Activated B cell treated with CpG ODN at 0.5 μM for 24 hours (primary cell): ENCODE measurements at regions of chr13 and their contacts with region 1.

Region 1: GRCh38 chr13:49606747-49607648 is 21.3 kb upstream of the ARL11 start:
- DNase-seq: peak; percentile 64
- ATAC-seq: peak; percentile 96
- H3K4me3 Mint-ChIP-seq: peak overlapping the region; percentile 81
- H3K27ac Mint-ChIP-seq: peak overlapping the region; percentile 79
- H3K4me1 Mint-ChIP-seq: peaks cover 26% of the 10 kb centered on the region
- H3K27me3 Mint-ChIP-seq: no peaks in the 10 kb centered on the region
- CTCF ChIP-seq: no peak

Region 2: GRCh38 chr13:49240017-49240416 is 367.0 kb before region 1 on chr13:
- CTCF ChIA-PET with region 1: interaction called, 3 read pairs
- POLR2A ChIA-PET with region 1: no interaction called
- intact Hi-C with region 1: loop called (anchors 5 kb)
- DNase-seq: no peak
- ATAC-seq: peak; percentile 49
- H3K4me3 Mint-ChIP-seq: no peak overlapping the region
- H3K27ac Mint-ChIP-seq: no peak overlapping the region
- H3K4me1 Mint-ChIP-seq: no peaks in the 10 kb centered on the region
- H3K27me3 Mint-ChIP-seq: peaks cover 6% of the 10 kb centered on the region
- CTCF ChIP-seq: no peak

Region 3: GRCh38 chr13:49300739-49301589 is 306.0 kb before region 1 on chr13:
- CTCF ChIA-PET with region 1: interaction called, 7 read pairs
- POLR2A ChIA-PET with region 1: interaction called, 3 read pairs
- intact Hi-C with region 1: loop called (anchors 1 kb)
- DNase-seq: peak; percentile 43
- ATAC-seq: peak; percentile 98
- H3K4me3 Mint-ChIP-seq: peak overlapping the region; percentile 80
- H3K27ac Mint-ChIP-seq: peak overlapping the region; percentile 72
- H3K4me1 Mint-ChIP-seq: peaks cover 33% of the 10 kb centered on the region
- H3K27me3 Mint-ChIP-seq: no peaks in the 10 kb centered on the region
- CTCF ChIP-seq: no peak

Region 4: GRCh38 chr13:49421391-49421790 is 185.6 kb before region 1 on chr13:
- CTCF ChIA-PET with region 1: interaction called, 3 read pairs
- POLR2A ChIA-PET with region 1: no interaction called
- intact Hi-C with region 1: loop called (anchors 1 kb)
- DNase-seq: no peak
- ATAC-seq: peak; percentile 56
- H3K4me3 Mint-ChIP-seq: no peak overlapping the region
- H3K27ac Mint-ChIP-seq: no peak overlapping the region
- H3K4me1 Mint-ChIP-seq: peaks cover 6% of the 10 kb centered on the region
- H3K27me3 Mint-ChIP-seq: no peaks in the 10 kb centered on the region
- CTCF ChIP-seq: no peak

Region 5: DNA sequence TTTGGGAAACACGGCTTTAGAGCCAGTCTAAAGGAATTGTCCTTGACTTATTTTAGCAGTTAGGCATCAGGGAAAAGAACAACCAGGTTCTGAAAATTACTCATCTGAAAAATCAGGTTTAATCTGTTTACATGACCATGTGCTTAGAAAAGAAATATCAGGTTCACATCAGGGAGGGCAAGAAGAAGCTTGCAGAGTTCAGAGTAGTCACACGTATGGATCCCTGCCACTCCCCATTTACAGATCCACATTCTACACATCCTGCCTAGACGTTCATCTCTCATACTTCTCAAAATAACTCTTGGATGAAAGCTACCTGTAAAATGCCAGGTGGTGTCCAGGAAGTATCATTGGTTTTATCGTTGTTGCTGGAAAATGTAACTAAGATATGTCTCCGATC is 125.2 kb before region 1 on chr13:
- CTCF ChIA-PET with region 1: no interaction called
- POLR2A ChIA-PET with region 1: no interaction called
- intact Hi-C with region 1: no loop called
- DNase-seq: no peak
- ATAC-seq: no peak
- H3K4me3 Mint-ChIP-seq: no peak overlapping the region
- H3K27ac Mint-ChIP-seq: no peak overlapping the region
- H3K4me1 Mint-ChIP-seq: no peaks in the 10 kb centered on the region
- H3K27me3 Mint-ChIP-seq: no peaks in the 10 kb centered on the region
- CTCF ChIP-seq: no peak

Region 6: DNA sequence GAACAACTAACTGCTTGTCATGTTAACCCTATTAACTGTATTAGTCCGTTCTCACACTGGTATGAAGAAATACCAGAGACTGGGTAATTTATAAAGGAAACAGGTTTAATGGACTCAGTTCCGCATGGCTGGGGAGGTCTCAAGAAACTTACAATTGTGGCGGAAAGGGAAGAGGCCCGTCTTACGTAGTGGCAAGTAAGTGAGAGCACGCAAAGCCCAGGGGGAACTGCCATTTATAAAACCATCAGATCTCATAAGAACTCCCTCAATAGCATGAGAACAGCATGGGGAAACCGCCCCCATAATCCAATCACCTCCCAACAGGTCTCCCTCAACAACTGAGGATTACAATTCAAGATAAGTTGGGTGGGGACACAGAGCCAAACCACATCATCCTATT is 76.5 kb before region 1 on chr13:
- CTCF ChIA-PET with region 1: interaction called, 3 read pairs
- POLR2A ChIA-PET with region 1: no interaction called
- intact Hi-C with region 1: loop called (anchors 2 kb)
- DNase-seq: peak; percentile 30
- ATAC-seq: peak; percentile 88
- H3K4me3 Mint-ChIP-seq: peak overlapping the region; percentile 67
- H3K27ac Mint-ChIP-seq: peak overlapping the region; percentile 89
- H3K4me1 Mint-ChIP-seq: peaks cover 73% of the 10 kb centered on the region
- H3K27me3 Mint-ChIP-seq: no peaks in the 10 kb centered on the region
- CTCF ChIP-seq: no peak

Region 7: GRCh38 chr13:49585220-49586157 is 21.5 kb before region 1 on chr13 and contains the start of gene RCBTB1:
- CTCF ChIA-PET with region 1: interaction called, 4 read pairs
- POLR2A ChIA-PET with region 1: interaction called, 3 read pairs
- intact Hi-C with region 1: loop called (anchors 1 kb)
- DNase-seq: peak; percentile 73
- ATAC-seq: peak; percentile 87
- H3K4me3 Mint-ChIP-seq: peak within 1 kb of the TSS; percentile 90
- H3K27ac Mint-ChIP-seq: peak within 1 kb of the TSS; percentile 86
- H3K4me1 Mint-ChIP-seq: peaks cover 31% of the 10 kb centered on the region
- H3K27me3 Mint-ChIP-seq: no peaks in the 10 kb centered on the region
- CTCF ChIP-seq: no peak
- total RNA-seq, gene RCBTB1: 19.7 and 22.6 TPM in 2 replicates

Region 8: DNA sequence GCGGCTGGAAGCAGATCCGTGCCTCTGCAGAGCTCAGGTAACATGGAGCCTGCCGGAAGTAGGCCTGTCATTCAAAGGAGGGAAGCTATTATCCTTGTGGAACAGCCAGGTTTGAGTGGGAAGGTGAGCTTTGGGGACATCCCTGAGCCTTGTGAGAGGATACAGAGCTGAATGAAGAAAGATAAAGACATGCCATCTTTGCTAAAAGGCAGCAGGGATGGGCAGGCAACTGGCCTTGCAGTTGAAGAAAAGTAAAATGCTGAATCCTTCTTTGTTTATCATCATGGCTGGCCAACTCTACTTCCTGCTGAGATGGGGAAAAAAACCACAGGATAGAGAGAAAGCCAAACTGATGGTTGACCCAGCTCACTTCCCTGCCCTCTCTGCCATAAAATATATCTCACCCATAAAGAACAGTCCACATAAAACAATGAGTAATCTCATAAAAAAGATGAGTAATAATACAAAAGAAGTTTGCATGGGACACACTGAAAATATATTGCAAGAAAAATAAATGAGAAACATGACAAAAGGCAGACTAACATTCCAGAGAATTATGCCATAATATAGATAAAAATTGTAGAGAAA is 1010.2 kb after region 1 on chr13:
- CTCF ChIA-PET with region 1: no interaction called
- POLR2A ChIA-PET with region 1: no interaction called
- intact Hi-C with region 1: no loop called
- DNase-seq: no peak
- ATAC-seq: peak; percentile 21
- H3K4me3 Mint-ChIP-seq: no peak overlapping the region
- H3K27ac Mint-ChIP-seq: peak overlapping the region; percentile 30
- H3K4me1 Mint-ChIP-seq: peaks cover 41% of the 10 kb centered on the region
- H3K27me3 Mint-ChIP-seq: no peaks in the 10 kb centered on the region
- CTCF ChIP-seq: no peak

Region 9: DNA sequence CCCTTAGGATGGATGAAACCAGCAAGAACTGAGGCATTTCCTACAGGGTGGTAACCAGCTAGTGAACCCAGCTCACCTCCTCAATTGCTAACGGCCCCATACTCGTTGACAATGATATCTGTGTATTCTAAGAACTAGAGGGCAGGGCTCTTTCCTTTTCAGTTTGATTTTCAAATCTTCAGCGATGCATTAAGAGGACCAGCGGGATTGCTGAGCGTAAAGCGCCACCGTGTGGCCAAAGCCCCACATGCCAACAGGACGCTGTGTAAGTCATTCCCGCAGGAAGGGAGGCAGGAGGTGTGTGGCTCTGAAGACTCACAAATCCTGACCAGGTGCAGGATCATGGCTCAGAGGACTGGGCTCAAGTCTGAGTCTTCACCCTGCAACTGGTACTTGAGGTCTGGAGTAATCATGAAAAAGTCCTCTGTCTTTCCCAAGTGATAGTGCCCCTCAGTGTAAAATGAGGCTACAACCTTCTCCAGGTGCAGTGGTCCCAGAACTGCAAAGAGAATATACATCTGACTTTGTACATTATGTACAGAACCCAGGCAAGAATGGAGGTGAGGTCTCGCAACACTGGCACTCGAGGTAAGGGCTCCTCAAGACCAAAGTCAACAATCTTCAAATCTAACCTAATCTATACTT is 1463.1 kb after region 1 on chr13:
- CTCF ChIA-PET with region 1: no interaction called
- POLR2A ChIA-PET with region 1: no interaction called
- intact Hi-C with region 1: loop called (anchors 1 kb)
- DNase-seq: peak; percentile 68
- ATAC-seq: peak; percentile 92
- H3K4me3 Mint-ChIP-seq: no peak overlapping the region
- H3K27ac Mint-ChIP-seq: no peak overlapping the region
- H3K4me1 Mint-ChIP-seq: peaks cover 7% of the 10 kb centered on the region
- H3K27me3 Mint-ChIP-seq: peaks cover 28% of the 10 kb centered on the region
- CTCF ChIP-seq: peak; percentile 96